Aorta (tissue), 5 donors: ENCODE measurements at regions of chr1 and their contacts with region 1.

Region 1: GRCh38 chr1:154183045-154183915 is 8.6 kb downstream of the TPM3 start:
- DNase-seq: peak; percentile 97 to 99
- ATAC-seq: peak; percentile 98
- H3K4me3 ChIP-seq: peak overlapping the region; percentile 66 to 74
- H3K27ac ChIP-seq: peak overlapping the region in 1 of 2 donors; percentile 77
- H3K4me1 ChIP-seq: peaks cover 4 to 5% of the 10 kb centered on the region in 2 donors
- H3K27me3 ChIP-seq: no peaks in the 10 kb centered on the region

Region 2: GRCh38 chr1:154220071-154220969 is 37.0 kb after region 1 on chr1 and contains the start of gene UBAP2L:
- intact Hi-C with region 1: loop called (anchors 2 to 5 kb)
- DNase-seq: peak; percentile 100
- ATAC-seq: peak; percentile 98
- H3K4me3 ChIP-seq: peak within 1 kb of the TSS; percentile 70 to 89
- H3K27ac ChIP-seq: peak within 1 kb of the TSS; percentile 58 to 98
- H3K4me1 ChIP-seq: peaks cover 0 to 2% of the 10 kb centered on the region in 2 donors
- H3K27me3 ChIP-seq: no peaks in the 10 kb centered on the region
- total RNA-seq, gene UBAP2L: 110 to 146 TPM

Region 3: DNA sequence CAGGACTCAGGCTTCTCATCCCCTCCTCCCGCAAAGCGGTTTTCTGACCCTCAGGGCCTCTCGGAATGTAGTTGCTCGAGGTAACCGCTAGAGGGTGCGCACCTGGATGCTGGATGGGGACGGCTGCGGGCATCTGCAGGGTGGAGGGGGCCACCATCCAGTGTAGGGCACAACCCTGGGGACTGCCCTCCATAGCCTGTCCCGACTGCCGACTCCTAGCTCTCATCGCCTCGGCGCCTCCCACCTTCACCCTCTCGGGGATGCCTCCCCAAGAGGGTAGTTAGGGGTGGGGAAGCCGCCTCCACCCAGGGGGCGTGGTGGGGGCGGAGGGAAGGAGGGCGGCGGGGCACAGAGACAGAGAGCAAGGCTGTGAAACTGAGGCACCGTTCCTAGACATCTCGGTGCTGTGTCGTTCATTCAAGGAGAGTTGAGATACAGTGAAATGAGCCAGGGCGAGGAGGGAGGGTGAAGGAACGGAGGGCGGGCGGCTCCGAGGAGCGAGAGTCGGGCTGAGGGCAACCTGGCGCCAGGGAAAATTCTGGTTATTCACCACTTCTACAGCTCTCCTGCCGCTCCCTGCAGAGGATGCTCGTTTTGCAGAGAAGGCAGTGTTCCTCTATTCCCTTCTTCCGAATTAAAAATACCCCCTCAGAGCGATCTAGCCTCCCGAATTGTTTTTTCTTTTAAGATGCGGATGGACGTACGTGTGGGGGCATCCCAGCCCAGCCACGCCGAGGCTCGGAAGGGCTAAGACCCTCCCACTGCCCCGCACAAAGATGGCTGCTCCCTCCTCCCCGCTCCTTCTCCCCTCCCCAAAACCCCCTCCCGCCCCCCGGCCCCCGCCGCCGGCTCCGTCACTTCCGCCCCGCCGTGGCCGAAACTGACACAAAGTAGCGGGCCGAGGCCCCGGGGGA is 141.6 kb after region 1 on chr1 and contains the start of gene ATP8B2:
- intact Hi-C with region 1: loop called in 1 of 2 experiments (anchors 2 kb)
- DNase-seq: peak; percentile 84 to 93
- ATAC-seq: peak; percentile 82
- H3K4me3 ChIP-seq: peak within 1 kb of the TSS; percentile 90 to 91
- H3K27ac ChIP-seq: peak within 1 kb of the TSS; percentile 81 to 95
- H3K4me1 ChIP-seq: peaks cover 0 to 7% of the 10 kb centered on the region in 2 donors
- H3K27me3 ChIP-seq: no peaks in the 10 kb centered on the region
- total RNA-seq, gene ATP8B2: 122 to 176 TPM